RWPE1 (cell line): ENCODE measurements at regions of chr1 and their contacts with region 1.

Region 1: DNA sequence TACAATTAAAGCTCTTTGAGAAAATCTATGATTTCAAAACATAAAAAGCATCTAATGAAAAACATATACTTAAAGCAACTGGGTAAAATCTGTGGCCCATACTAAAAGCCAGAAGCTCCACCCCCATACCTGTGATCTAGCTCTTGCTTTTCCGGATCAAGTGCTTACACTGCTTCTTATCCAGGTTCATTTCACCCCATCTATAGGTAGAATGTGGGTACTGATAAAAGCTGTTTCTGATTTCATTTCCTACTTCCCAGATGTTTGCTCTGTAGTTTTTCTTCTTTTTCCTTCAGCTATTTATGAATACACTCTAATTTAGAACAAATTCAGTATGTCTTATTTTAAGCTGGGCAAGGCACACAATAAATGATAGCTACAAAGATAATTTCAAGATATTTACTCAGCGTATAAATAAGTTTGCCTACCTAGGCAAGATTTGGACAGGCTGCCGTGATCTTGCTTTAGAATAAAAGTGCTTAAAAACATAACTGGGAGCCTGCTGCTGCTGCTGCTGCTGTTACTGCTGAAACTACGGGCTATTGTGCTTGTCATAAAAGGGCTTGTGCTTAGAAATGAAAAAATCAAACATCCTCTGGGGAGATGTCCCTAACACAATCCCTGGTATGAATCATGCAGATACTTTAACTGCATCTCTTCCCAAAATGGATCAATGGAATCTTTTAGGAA is 2.1 kb downstream of the SIPA1L2 start:
- DNase-seq: peak; percentile 72
- H3K27ac ChIP-seq: no peak overlapping the region
- CTCF ChIP-seq: peak; percentile 73

Region 2: DNA sequence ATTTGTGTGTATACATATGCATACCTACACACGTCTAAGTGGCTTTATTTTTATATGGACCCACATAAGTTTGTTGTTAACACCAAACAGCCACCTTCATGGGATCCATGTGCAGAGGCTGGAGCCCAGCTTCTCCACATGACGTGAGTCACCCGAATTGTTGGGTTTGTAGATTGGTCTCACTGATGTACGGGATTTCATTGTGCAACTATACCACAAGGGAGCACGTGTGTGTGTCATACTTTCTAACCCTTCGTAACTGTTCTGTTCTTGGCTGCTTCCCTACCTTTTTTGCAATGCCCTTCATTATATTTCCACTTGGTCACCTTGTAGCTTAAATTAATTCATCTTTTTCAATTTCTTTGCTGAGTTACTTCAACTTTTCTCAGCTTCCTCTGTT is 1268.7 kb before region 1 on chr1:
- CTCF ChIA-PET with region 1: no interaction called
- POLR2A ChIA-PET with region 1: no interaction called
- DNase-seq: no peak
- H3K27ac ChIP-seq: no peak overlapping the region
- CTCF ChIP-seq: no peak

Region 3: DNA sequence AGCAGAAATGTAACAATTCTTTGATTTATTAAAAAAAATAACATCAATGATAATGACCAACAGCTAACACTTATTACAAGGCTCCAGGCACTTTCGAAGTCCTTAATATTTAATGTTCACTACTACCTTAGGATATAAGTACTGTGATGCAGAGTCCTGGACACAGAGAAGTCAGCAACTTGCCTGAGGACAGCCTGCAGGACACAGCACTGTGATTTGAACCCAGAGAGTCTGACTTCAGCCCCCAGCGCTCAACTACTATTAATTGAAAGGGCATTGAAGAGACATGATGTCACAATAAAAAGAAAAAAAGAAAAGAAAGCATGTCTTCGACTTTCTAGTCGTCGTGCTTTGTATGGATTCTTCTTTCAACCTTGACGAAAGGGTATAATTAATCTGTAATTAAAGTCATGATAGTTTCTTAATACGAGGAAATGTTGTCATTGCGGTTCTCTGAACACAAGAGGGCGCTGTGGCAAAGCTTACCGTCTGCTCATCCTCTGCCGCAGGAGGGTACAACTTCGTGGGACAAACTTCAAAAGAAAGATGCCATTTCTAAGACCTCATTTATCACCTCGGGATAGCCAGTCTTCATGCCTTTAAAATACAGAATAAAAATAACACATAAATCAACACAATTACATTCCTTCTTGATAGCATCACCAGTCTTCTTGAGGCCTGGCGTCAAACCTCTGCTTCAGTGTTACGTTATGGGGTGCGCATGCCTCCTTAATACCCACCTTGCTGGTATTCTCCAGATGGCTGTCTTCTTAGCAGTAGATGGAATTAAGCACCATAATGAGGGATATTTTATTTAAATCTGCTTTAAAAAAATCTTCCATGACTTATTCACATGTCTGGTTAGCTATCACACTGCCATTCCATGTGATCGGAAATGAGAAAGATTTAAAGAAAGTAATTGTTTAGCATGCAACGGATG is 761.1 kb before region 1 on chr1:
- CTCF ChIA-PET with region 1: interaction called, 10 read pairs
- POLR2A ChIA-PET with region 1: no interaction called
- DNase-seq: peak; percentile 45
- H3K27ac ChIP-seq: no peak overlapping the region
- CTCF ChIP-seq: peak; percentile 88